Activated T-helper 1 cell treated with anti-CD3 and anti-CD28 coated beads, Interleukin-12 subunit alpha, Interleukin-12 subunit beta, Interleukin-2, Interleukin-4 antibody, amounts not matched to agents 30 ng/mL and 10 ng/mL and 1 ng/mL, durations not matched to agents 14 hours and 24 hours and 36 hours (primary cell): ENCODE measurements at regions of chr2 and their contacts with region 1.

Region 1: DNA sequence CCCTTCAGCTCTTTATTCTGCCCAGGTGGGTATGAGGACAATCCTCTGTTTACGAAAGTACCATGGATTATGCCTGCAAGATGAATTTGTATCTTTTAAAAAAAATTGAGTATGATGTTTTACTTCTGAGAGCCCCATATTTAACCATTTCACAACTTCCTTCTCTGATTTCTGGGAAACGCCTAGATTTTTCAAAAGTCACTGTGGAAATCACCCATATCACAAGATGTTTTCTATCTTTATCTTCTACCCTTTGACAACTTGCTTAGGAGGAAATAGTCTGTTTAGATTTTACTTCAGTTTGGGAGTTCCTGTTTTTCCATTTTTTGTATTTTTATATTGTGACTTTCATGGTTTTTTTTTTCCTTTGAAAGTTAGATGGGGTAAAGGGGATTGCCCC is 53.0 kb downstream of the ICOS start:
- DNase-seq: no peak
- H3K4me3 Mint-ChIP-seq: peak overlapping the region; percentile 3
- H3K27ac Mint-ChIP-seq: peak overlapping the region; percentile 78
- H3K4me1 Mint-ChIP-seq: peaks cover 37% of the 10 kb centered on the region
- H3K27me3 Mint-ChIP-seq: no peaks in the 10 kb centered on the region

Region 2: DNA sequence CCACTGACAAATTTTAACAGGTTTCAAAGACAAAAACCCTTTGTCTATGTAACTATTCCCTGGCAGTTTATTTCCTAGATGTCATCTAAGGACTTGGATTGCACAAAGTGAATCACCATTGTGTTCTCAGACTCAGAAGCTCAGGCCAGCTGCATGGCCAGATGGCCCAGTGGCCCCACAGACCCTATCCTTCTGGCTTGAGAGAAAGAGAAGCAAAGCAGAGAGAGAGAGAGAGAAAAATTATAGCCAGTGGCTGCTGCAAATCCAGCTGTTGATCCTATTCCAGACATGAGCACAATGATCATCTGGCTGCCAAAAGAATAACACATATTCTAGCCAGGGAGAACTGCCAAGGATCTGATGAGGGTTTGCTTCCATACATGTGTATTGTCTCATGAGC is 96.1 kb before region 1 on chr2:
- intact Hi-C with region 1: loop called (anchors 2 kb)
- DNase-seq: no peak
- H3K4me3 Mint-ChIP-seq: no peak overlapping the region
- H3K27ac Mint-ChIP-seq: peak overlapping the region; percentile 89
- H3K4me1 Mint-ChIP-seq: peaks cover 73% of the 10 kb centered on the region
- H3K27me3 Mint-ChIP-seq: no peaks in the 10 kb centered on the region

Region 3: GRCh38 chr2:203951366-203951902 is 38.1 kb before region 1 on chr2:
- intact Hi-C with region 1: loop called (anchors 1 kb)
- DNase-seq: peak; percentile 34
- H3K4me3 Mint-ChIP-seq: peak overlapping the region; percentile 85
- H3K27ac Mint-ChIP-seq: peak overlapping the region; percentile 92
- H3K4me1 Mint-ChIP-seq: peaks cover 85% of the 10 kb centered on the region
- H3K27me3 Mint-ChIP-seq: no peaks in the 10 kb centered on the region

Region 4: GRCh38 chr2:203972066-203972465 is 17.5 kb before region 1 on chr2:
- intact Hi-C with region 1: loop called (anchors 1 kb)
- DNase-seq: no peak
- H3K4me3 Mint-ChIP-seq: no peak overlapping the region
- H3K27ac Mint-ChIP-seq: no peak overlapping the region
- H3K4me1 Mint-ChIP-seq: peaks cover 14% of the 10 kb centered on the region
- H3K27me3 Mint-ChIP-seq: no peaks in the 10 kb centered on the region

Region 5: DNA sequence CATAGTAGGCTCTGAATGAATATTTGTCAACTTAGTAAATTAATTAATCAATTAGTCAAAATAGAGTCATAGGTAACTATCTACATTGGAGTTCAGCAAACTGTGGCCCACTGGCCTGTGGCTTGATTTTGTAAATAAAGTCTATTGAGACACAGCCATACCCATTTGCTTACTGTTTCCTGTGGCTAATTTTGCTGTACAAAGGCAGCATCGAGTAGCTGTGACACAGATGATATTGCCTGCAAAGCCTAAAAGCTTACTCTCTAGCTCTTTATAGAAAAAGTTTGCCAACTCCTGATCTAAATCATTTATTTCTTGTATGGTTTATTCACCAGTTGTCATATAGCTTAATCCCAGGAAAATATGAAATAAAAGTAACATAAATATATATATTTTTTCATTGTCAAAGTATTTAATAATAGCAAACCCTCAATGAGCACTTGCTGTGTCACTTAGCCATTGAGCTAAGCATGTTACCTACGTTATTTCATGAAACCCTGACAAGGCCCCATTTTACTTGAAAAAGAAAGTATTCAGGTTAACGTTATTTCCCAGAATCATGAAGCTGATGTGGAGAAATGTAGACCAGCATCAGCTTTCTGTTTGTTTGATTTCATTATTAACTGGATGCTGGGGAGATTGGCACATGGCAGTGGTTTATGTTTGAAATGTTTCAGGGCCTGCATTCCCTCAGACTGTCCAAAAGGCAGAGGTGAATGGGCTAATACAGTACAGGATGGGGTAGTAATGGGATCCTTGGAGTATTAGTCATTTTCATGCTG is 16.6 kb after region 1 on chr2:
- intact Hi-C with region 1: loop called (anchors 1 kb)
- DNase-seq: no peak
- H3K4me3 Mint-ChIP-seq: no peak overlapping the region
- H3K27ac Mint-ChIP-seq: peak overlapping the region; percentile 85
- H3K4me1 Mint-ChIP-seq: peaks cover 91% of the 10 kb centered on the region
- H3K27me3 Mint-ChIP-seq: no peaks in the 10 kb centered on the region

Region 6: DNA sequence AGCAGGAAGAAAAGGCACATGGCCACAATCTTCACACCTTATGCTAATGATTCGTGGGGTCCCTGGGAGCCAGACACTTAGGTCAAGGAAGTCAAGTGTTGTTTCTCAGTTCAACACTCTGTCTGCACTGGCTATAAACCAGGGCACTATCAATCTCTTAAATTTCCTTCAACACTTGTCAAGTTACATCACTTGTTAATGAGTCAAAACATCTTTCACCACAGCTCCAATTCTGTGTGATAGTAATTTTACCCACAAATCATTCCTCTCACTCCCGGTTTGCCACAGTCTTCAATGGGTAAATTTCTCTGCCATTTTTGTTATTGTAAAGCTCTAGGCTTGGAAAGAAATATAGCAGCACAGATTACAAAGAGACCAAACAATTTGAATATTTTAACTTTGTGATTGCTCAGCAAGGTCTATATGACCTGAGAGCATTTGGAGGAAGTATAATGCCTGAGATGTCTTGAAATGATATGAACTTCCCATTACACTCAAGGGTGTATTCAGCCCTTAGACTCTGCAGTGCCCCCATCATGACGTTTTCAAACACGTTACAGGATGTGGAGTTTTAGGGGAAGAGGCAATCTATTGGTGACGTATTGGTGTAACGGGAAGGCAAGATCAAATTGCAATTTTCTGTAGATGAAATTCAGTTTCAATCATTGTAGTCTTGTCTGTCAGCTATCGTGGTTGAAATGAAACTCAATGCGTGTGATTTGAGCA is 25.8 kb after region 1 on chr2:
- intact Hi-C with region 1: loop called (anchors 1 kb)
- DNase-seq: no peak
- H3K4me3 Mint-ChIP-seq: peak overlapping the region; percentile 27
- H3K27ac Mint-ChIP-seq: peak overlapping the region; percentile 73
- H3K4me1 Mint-ChIP-seq: peaks cover 90% of the 10 kb centered on the region
- H3K27me3 Mint-ChIP-seq: no peaks in the 10 kb centered on the region